HepG2 (cell line): ENCODE measurements at regions of chr3 and their contacts with region 1.

Region 1: DNA sequence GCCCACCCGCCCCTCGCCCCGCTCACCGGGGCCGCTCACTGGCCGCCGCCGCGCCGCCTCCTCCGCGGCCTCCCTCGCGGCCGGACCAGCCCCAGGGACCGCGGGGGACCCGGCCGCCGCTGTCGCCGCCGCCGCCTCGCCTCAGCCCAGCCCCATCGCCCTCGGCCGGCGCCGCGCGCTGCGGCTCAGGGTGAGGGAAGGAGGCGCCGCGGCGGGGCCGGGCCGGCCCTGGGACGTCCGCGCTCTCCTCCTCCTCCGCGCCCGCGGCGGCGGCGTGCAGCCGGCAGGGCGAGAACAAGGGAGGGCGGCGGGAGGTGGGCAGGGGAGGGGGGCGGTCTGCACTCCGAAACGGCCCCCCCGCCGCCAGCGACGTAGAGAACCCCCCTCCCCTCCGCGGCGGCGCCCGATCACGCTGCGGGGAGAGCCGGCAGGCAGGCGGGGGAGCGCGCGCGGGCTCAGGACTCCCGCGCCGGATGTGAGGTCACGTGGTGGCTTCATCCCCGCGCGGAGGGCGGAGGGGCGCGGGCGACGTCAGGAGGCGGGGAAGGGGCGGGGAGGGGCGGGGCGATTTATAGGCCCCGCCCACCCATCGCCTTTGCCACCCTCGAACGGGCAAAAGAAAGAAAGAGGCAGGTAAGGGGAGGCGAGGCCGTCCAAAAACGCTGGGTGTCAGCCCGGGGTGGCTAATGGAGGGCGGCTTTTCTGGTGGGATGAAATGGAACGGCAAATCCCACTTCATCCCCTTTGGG is at the start of gene ATP13A3:
- DNase-seq: peak; percentile 65
- ATAC-seq: peak; percentile 85
- H3K4me3 ChIP-seq: peak within 1 kb of the TSS; percentile 72 to 95 (median 78)
- H3K27ac ChIP-seq: peak within 1 kb of the TSS; percentile 73
- H3K4me1 ChIP-seq: peaks cover 73% of the 10 kb centered on the region
- H3K27me3 ChIP-seq: peaks cover 0 to 1% of the 10 kb centered on the region in 2 experiments; a peak in 3 of 5 replicates
- CTCF ChIP-seq: peak; percentile 5; the same call in 1 of the 2 replicates
- EP300 ChIP-seq: 0 out of 4 replicates have a peak, but pooled peaks of 1 of the 2 experiments have one; percentile 17
- POLR2A ChIP-seq: peak in 1 of 2 experiments; percentile 70; a peak in 3 of 4 replicates
- RAD21 ChIP-seq: 0 out of 2 replicates have a peak, but pooled peaks have one; percentile 18
- total RNA-seq, gene ATP13A3: 80.8 and 82.6 TPM in 2 replicates

Region 2: DNA sequence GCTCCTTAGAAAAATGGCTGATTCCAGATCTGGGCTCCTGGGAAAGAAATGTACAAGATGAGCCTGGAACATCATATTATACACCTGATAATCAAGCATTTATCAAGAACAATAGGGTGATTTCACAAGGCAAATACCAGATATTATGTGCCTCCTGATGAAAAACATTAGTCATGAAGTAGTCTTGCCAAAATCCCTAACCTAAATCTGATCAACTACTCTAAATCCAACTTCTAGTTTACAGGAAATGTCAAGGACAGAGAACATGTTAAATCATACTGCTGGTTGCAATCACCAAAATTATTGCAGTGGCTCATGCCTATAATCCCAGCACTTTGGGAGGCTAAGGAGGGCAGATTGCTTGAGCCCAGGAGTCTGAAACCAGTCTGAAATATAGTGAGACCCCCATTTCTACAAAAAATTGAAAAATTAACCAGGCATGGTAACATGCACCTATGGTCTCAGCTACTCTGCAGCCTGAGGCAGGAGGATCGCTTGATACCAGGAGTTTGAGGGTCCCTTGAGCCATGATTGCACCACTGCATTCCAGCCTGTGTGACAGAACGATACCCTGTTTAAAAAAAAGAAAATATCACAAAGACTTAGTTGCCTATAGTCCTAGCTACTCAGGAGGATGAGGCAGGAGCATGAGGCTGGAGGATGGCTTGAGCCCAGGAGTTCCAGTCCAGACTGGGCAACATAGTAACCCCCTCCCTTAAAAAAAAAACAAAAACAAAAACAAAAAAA is 35.0 kb after region 1 on chr3:
- CTCF ChIA-PET with region 1: no interaction called
- POLR2A ChIA-PET with region 1: no interaction called
- in situ Hi-C with region 1: no loop called
- intact Hi-C with region 1: loop called (anchors 5 kb)
- DNase-seq: no peak
- ATAC-seq: no peak
- H3K4me3 ChIP-seq: no peak overlapping the region
- H3K27ac ChIP-seq: no peak overlapping the region
- H3K4me1 ChIP-seq: peaks cover 50% of the 10 kb centered on the region
- H3K27me3 ChIP-seq: no peaks in the 10 kb centered on the region
- CTCF ChIP-seq: no peak
- EP300 ChIP-seq: no peak
- POLR2A ChIP-seq: no peak
- RAD21 ChIP-seq: no peak